CD8-positive, alpha-beta memory T cell (primary cell): ENCODE measurements at regions of chr5 and their contacts with region 1.

Region 1: DNA sequence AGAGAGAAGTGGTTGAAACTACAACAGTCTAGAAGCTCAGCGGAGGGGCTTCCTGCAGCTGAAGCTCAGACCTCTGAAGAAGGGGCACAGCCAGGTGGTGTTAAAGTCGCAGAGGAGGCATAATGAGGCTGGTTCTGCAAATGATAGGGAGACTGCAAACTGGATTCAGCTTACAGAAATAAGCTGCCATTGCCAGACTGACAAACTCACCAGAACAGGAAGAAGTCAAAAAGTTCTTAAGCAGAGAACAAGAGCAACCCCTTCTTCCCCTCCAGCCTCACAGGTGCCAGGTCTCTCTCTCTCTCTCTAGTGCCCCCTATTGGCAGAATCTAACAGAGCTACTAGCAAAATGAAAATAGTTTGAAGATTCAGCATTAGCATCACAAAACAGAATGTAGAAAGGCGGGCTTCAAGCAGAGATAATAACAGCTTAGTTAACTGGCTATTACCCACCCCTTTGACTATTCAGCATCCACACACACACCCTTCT is 76.7 kb downstream of the GRAMD2B start:
- DNase-seq: peak in 4 of 5 donors; percentile 5 to 67 (median 51)
- H3K4me3 ChIP-seq: no peak overlapping the region
- H3K4me3 Mint-ChIP-seq: no peak overlapping the region
- H3K27ac ChIP-seq: no peak overlapping the region
- H3K27ac Mint-ChIP-seq: peak overlapping the region in 6 of 8 donors; percentile 8 to 80 (median 59)
- H3K4me1 ChIP-seq: peaks cover 11% of the 10 kb centered on the region
- H3K4me1 Mint-ChIP-seq: peaks cover 6 to 22% (median 13%) of the 10 kb centered on the region in 3 donors
- H3K27me3 ChIP-seq: no peaks in the 10 kb centered on the region
- H3K27me3 Mint-ChIP-seq: no peaks in the 10 kb centered on the region

Region 2: DNA sequence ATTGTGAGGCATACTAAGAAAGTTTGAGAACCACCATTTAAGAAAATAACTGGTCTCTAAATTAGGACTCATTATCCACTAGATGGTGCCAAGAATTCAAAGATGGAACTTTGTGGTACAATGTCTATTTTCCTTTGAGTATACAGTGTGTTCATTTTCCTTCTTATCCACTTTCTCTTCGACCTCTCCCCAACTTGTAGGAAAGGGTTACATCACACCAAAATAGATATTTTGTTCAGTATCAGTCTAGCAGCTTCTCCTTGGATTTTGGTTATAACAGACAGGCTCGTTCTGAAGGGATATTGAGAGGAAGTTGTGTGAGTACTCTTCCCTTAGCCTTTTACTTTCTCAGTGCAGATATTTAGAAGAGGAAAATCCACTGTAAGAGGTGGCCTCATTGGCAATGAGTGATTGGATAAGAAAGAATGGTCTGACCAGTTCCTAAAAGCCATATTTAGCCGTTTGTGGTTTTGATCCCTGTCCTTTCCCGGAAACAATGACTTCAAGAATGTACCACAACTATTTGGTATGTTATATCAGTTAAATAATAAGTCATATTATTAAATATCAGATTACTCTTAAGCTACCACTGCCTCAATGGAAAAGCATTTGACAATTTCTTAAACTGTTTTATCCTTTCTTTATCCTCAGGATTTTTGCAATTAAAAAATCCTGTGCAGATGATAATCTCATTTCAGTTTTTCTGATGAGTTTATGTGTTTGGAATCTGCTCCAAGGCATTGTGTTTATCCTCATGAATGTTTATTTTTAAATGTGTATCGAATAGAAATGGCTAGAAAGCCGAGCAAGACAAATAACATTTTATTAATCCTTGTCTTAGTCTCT is 145.7 kb before region 1 on chr5:
- CTCF ChIA-PET with region 1: interaction called, 14 read pairs
- POLR2A ChIA-PET with region 1: no interaction called
- DNase-seq: peak in 2 of 5 donors; percentile 30 to 57
- H3K4me3 ChIP-seq: no peak overlapping the region
- H3K4me3 Mint-ChIP-seq: peak overlapping the region in 4 of 7 donors; percentile 37 to 70 (median 52)
- H3K27ac ChIP-seq: no peak overlapping the region
- H3K27ac Mint-ChIP-seq: peak overlapping the region in 5 of 8 donors; percentile 1 to 77 (median 32)
- H3K4me1 ChIP-seq: peaks cover 12% of the 10 kb centered on the region
- H3K4me1 Mint-ChIP-seq: peaks cover 4 to 15% (median 11%) of the 10 kb centered on the region in 3 donors
- H3K27me3 ChIP-seq: no peaks in the 10 kb centered on the region
- H3K27me3 Mint-ChIP-seq: peaks cover 0 to 18% of the 10 kb centered on the region in 2 donors

Region 3: GRCh38 chr5:126449751-126450271 is 50.1 kb before region 1 on chr5:
- CTCF ChIA-PET with region 1: interaction called, 11 read pairs
- POLR2A ChIA-PET with region 1: no interaction called
- DNase-seq: peak; percentile 13 to 69 (median 58)
- H3K4me3 ChIP-seq: peak overlapping the region; percentile 53
- H3K4me3 Mint-ChIP-seq: peak overlapping the region; percentile 82 to 91 (median 88)
- H3K27ac ChIP-seq: peak overlapping the region; percentile 81
- H3K27ac Mint-ChIP-seq: peak overlapping the region; percentile 86 to 99 (median 97)
- H3K4me1 ChIP-seq: peaks cover 72% of the 10 kb centered on the region
- H3K4me1 Mint-ChIP-seq: peaks cover 51 to 70% (median 58%) of the 10 kb centered on the region in 3 donors
- H3K27me3 ChIP-seq: no peaks in the 10 kb centered on the region
- H3K27me3 Mint-ChIP-seq: no peaks in the 10 kb centered on the region

Region 4: GRCh38 chr5:126513703-126514102 is 13.8 kb after region 1 on chr5:
- CTCF ChIA-PET with region 1: interaction called, 11 read pairs
- POLR2A ChIA-PET with region 1: no interaction called
- DNase-seq: no peak
- H3K4me3 ChIP-seq: no peak overlapping the region
- H3K4me3 Mint-ChIP-seq: no peak overlapping the region
- H3K27ac ChIP-seq: peak overlapping the region; percentile 45
- H3K27ac Mint-ChIP-seq: no peak overlapping the region
- H3K4me1 ChIP-seq: peaks cover 12% of the 10 kb centered on the region
- H3K4me1 Mint-ChIP-seq: peaks cover 13 to 17% (median 15%) of the 10 kb centered on the region in 3 donors
- H3K27me3 ChIP-seq: no peaks in the 10 kb centered on the region
- H3K27me3 Mint-ChIP-seq: no peaks in the 10 kb centered on the region